Dorsolateral prefrontal cortex (tissue), 120 donors: ENCODE measurements at regions of chr13 and their contacts with region 1.

Region 1: DNA sequence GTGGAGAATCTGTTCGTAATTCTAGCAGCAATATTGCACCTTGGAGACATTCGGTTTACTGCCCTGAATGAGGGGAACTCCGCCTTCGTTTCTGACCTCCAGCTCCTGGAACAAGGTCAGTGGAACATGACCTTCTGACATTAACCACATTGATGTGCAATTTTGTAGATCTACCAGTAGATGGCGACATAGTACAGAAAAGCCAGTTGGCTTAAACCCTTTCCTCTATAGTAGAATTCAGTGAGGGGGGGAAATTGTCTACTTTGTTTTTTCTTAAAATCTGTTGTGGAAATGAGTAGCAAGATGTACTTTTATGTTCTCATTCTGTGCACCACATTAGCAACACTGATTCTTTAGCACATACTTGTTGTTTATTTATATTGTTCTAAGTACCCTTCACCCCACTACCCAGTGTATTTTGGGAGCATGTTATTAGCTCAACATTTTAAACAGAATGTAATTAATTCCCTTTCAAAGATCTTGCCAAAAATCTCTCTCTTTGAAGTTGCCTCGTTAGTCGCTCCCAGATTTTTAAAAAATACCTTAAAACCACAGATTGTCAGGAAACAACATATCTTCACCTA is 332.2 kb downstream of the MYO16 start:
- DNase-seq: no peak
- H3K4me3 ChIP-seq: no peak overlapping the region
- H3K27ac ChIP-seq: no peak overlapping the region
- H3K27me3 ChIP-seq: no peaks in the 10 kb centered on the region
- CTCF ChIP-seq: peak; percentile 84 to 98 (median 92)

Region 2: DNA sequence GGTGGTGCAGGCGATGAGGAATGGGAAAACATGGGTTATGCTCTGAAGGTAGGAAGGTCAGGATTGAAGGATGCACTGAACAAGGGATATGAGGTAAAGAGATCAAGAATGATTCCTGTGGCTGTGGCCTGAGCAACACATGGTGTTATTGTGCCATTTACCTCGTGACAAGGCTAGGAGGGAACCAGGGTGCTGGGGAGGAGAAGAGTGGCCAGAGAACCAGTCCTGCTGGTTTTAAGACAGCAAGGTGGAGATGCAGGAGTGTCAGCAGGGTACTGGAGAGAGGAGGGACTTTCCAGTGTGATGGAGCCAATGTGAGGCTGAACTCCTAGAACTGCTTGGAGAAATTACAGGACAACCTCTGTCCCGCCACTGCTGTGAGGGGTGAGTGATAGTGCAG is 49.8 kb before region 1 on chr13:
- intact Hi-C with region 1: loop called in 1 of 2 experiments (anchors 5 kb)
- DNase-seq: no peak
- H3K4me3 ChIP-seq: no peak overlapping the region
- H3K27ac ChIP-seq: no peak overlapping the region
- H3K27me3 ChIP-seq: no peaks in the 10 kb centered on the region
- CTCF ChIP-seq: no peak

Region 3: GRCh38 chr13:109131698-109132257 is 170.1 kb after region 1 on chr13:
- intact Hi-C with region 1: loop called in 1 of 2 experiments (anchors 5 kb)
- DNase-seq: no peak
- H3K4me3 ChIP-seq: no peak overlapping the region
- H3K27ac ChIP-seq: peak overlapping the region in 1 of 59 donors; percentile 23
- H3K27me3 ChIP-seq: peaks cover 0 to 7% (median 0%) of the 10 kb centered on the region in 45 donors
- CTCF ChIP-seq: no peak

Region 4: GRCh38 chr13:109781384-109782065 is 819.9 kb after region 1 on chr13:
- intact Hi-C with region 1: loop called (anchors 2 to 5 kb)
- DNase-seq: no peak
- H3K4me3 ChIP-seq: peak overlapping the region; percentile 48 to 92 (median 68)
- H3K27ac ChIP-seq: peak overlapping the region in 52 of 59 donors; percentile 4 to 97 (median 56)
- H3K27me3 ChIP-seq: no peaks in the 10 kb centered on the region
- CTCF ChIP-seq: no peak

Region 5: DNA sequence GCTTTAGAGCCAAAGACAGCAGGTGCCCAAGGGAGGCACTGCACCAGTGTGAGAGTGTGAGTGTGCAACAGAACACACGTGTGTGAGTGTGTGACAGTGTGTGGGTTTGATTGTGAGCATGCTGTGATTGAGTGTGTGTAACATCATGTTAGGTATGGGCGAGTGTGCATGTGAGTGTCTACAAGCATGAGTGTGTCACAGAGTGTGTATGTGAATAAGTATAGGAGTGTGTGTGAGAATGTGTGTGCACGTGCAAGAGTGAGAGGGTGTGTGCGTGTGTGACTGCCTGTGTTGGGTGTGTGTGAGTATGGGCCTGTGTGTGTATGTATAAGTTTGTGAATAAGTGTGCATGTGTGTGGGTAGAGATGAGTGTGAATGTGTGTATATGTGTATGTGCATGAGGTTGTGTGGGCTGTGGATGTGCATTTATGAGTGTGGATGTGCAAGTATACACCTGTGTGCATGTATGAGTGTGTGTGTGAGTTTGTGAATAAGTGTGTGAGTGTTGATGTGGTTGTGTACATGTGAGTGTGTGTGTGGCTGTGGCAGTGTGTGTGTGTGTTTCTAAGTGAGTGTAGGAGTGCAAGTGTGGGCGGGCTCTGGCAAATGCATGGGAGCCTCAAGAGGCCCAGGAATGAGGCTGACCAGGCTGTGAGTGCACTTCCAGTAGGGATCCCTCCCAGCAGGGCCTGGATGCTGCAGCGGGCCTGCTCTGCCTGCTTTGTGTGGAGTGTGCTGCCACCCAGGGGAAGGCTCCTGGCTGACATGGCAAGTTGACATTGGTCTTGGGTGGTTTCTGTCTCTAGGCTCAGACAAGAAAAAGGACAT is 1146.9 kb after region 1 on chr13:
- intact Hi-C with region 1: loop called (anchors 5 to 10 kb)
- DNase-seq: peak; percentile 28 to 87 (median 82)
- H3K4me3 ChIP-seq: no peak overlapping the region
- H3K27ac ChIP-seq: peak overlapping the region in 15 of 59 donors; percentile 14 to 76 (median 50)
- H3K27me3 ChIP-seq: no peaks in the 10 kb centered on the region
- CTCF ChIP-seq: peak; percentile 16 to 82 (median 68)

Region 6: GRCh38 chr13:110116072-110116487 is 1154.4 kb after region 1 on chr13:
- intact Hi-C with region 1: loop called in 1 of 2 experiments (anchors 10 kb)
- DNase-seq: no peak
- H3K4me3 ChIP-seq: no peak overlapping the region
- H3K27ac ChIP-seq: no peak overlapping the region
- H3K27me3 ChIP-seq: peaks cover 0 to 16% (median 0%) of the 10 kb centered on the region in 45 donors
- CTCF ChIP-seq: peak in 49 of 56 donors; percentile 19 to 59 (median 36)